ENCODE measurements at regions of chr6 and their contacts with region 1.

Region 1: DNA sequence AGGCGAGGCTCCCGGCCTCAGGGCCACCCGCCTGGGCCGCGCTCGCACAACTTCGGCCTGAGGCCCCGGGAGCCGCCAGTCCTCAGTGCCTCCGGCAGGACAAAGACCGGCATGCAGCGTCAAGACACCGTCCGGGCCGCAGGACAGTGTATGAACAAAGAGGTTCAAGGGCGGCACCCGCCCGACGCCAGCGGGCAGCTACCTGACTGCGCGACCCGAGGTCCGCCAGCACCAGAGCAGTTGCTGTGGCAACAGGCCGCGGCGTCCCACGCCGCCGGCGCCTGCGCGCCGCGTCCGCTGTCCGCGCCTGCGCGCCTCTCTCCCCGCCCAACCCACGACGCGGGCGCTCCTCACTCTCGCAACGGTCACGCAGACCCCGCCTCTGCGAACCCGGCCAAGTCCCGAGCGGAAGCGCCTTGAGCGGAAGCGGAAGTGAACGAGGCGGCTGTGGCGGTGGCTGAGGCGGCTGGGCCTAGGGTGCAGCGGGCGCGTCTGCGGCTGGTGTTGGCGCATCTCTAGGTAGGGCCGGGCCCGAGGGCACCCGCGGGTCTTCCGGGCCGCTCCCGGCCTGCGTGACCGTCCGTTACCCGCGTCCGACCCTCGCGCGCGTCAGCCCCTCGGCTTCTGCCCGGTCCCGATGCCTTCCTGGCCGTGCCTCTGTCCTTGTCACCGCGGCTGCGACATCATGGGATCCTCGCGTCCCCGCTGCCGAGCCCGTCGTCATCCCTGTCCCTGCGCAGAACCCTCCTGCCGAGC is at the start of gene FAM120B:
- DNase-seq: peak; percentile 99
- ATAC-seq: peak; percentile 99
- total RNA-seq, gene FAM120B: 20.5 TPM

Region 2: DNA sequence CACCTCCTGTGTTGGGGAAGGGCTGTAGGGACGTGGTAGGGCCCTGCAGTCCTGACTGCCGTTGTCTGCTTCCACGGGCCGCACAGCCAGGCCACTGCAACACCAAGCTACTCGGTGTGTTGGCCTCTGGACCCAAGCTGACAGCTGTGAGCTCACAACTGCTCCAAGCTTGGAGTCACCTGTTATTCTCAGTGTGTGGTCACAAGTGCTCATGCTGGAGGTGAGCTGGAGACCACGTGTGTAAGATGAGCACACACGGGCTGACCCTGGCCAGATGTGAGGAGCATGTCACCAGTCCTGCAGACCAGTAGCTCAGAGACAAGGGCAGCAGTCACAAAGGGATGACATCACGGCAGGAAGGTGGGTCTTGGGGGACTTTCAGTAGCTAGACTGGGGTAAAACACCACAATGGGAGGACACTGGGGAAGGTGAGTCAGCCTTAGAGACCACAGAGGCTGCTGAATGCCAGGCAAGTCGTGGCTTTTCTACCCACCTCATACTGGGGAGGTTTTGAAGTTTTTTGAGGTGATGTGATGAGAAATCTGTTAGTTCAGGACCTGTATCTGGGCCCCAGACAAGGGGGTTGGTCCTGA is 87.4 kb after region 1 on chr6:
- intact Hi-C with region 1: no loop called
- DNase-seq: no peak
- ATAC-seq: no peak

Region 3: DNA sequence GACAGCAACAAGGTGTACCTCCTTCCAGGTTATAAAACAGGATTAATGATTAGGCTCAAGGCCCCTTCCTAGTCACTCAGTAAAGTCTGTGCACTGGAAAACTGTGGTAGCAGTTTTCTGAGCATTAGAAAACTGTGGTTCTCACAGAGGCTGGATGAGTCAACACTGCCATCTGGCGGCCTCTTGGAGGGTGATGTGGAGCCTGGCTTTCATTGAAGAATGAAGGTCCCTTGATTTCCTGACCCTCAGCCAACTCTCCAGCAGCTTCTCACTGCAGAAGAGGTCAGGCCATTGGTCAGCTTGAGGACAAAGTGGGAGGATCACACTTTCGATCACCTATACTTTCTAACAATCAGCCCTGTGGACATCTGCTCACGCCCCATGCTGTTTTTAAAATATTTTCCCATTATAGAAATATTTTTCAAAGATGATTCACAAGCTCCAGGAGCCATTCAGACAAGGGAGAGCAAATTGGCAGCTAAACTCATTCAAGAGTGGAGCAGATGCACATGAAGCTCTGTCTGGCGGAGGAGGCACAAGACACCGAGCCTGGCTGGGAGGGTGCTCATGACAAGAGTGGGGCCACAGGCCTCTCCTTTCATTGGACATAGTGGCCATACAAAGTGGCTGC is 223.5 kb after region 1 on chr6:
- intact Hi-C with region 1: loop called (anchors 10 kb)
- DNase-seq: peak; percentile 84
- ATAC-seq: peak; percentile 85